H1 (cell line): ENCODE measurements at regions of chr11 and their contacts with region 1.

Region 1: DNA sequence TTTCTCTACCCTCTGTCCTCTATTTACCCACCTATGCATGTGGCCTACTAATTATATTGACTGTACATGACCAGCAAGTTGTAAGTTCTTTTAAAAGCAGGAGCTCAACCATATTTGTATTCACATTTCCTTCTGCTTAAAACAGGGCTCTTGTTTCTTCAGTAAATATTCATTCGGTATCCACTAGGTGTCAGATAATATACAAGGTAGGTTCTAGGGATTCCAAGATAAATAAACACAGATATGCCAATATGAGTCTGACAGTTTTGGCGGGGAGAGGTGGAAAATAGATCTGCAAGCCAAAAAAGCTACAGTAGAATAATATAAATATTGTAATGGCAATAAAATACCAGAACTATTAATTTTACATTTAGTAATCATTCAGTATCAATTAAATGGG is 15.3 kb upstream of the RAB30 start:
- DNase-seq: no peak
- H3K4me3 ChIP-seq: no peak overlapping the region
- H3K27ac ChIP-seq: no peak overlapping the region
- H3K4me1 ChIP-seq: no peaks in the 10 kb centered on the region
- H3K27me3 ChIP-seq: no peaks in the 10 kb centered on the region
- CTCF ChIP-seq: no peak
- EP300 ChIP-seq: no peak
- POLR2A ChIP-seq: no peak
- RAD21 ChIP-seq: no peak

Region 2: GRCh38 chr11:82936261-82936660 is 150.8 kb before region 1 on chr11:
- CTCF ChIA-PET with region 1: no interaction called
- POLR2A ChIA-PET with region 1: no interaction called
- DNase-seq: no peak
- H3K4me3 ChIP-seq: no peak overlapping the region
- H3K27ac ChIP-seq: no peak overlapping the region
- H3K4me1 ChIP-seq: no peaks in the 10 kb centered on the region
- H3K27me3 ChIP-seq: no peaks in the 10 kb centered on the region
- CTCF ChIP-seq: no peak
- EP300 ChIP-seq: no peak
- POLR2A ChIP-seq: no peak
- RAD21 ChIP-seq: no peak

Region 3: GRCh38 chr11:83071567-83072349 is 15.3 kb before region 1 on chr11 and contains the start of gene RAB30:
- CTCF ChIA-PET with region 1: interaction called, 14 read pairs
- POLR2A ChIA-PET with region 1: interaction called, 60 read pairs
- DNase-seq: peak; percentile 88 to 96
- H3K4me3 ChIP-seq: peak within 1 kb of the TSS; percentile 89 to 99 (median 92)
- H3K27ac ChIP-seq: peak within 1 kb of the TSS; percentile 98
- H3K4me1 ChIP-seq: peaks cover 0 to 17% (median 3%) of the 10 kb centered on the region in 4 experiments; a peak in 4 of 7 replicates
- H3K27me3 ChIP-seq: no peaks in the 10 kb centered on the region
- CTCF ChIP-seq: no peak
- EP300 ChIP-seq: no peak
- POLR2A ChIP-seq: peak; percentile 97 to 98
- RAD21 ChIP-seq: no peak
- total RNA-seq, gene RAB30: 9.2 and 11.7 TPM in 2 replicates

Region 4: DNA sequence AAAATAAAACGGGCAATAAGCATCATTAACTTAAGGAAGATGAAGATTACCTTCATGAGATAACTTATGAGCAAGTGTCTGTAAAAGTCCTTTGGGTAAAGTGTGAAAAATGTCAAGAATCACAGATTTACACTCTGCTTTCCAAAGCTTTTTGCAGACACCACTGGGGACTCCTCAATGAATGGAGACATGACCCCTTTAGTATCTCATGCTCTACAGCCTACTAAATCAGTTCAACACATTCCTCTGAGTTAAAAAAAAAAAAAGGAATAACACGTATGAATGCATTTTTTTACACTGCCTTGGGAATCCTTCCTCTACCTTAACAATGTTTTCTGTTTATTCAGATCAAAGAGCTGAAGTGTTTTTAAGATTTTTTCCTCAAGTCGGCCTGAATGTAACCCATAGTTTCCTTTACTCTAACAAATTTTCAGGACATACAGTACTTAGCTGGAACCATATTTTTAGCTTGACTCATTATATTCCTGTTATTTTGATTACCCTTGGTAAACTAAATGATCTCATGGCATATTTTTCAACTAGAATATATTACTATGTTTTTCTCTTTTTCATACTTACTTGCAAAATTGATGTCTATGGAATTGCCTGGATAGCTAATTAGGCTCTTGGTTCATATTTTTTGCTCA is 10.5 kb after region 1 on chr11:
- CTCF ChIA-PET with region 1: interaction called, 9 read pairs
- POLR2A ChIA-PET with region 1: interaction called, 25 read pairs
- DNase-seq: no peak
- H3K4me3 ChIP-seq: no peak overlapping the region
- H3K27ac ChIP-seq: no peak overlapping the region
- H3K4me1 ChIP-seq: no peaks in the 10 kb centered on the region
- H3K27me3 ChIP-seq: no peaks in the 10 kb centered on the region
- CTCF ChIP-seq: no peak
- EP300 ChIP-seq: no peak
- POLR2A ChIP-seq: no peak
- RAD21 ChIP-seq: no peak